ENCODE measurements at regions of chr2 and their contacts with region 1.

Region 1: GRCh38 chr2:83817511-83817910 is 641.6 kb downstream of the SUCLG1 start:
- DNase-seq: peak in 1 of 4 experiments; percentile 24
- ATAC-seq: peak; percentile 87
- H3K4me3 ChIP-seq: no peak overlapping the region
- H3K27ac ChIP-seq: no peak overlapping the region
- H3K4me1 ChIP-seq: no peaks in the 10 kb centered on the region
- H3K27me3 ChIP-seq: no peaks in the 10 kb centered on the region
- CTCF ChIP-seq: peak; percentile 20 to 65 (median 34); a peak in 4 of 6 replicates
- EP300 ChIP-seq: no peak
- POLR2A ChIP-seq: no peak
- RAD21 ChIP-seq: peak; percentile 56 to 58

Region 2: GRCh38 chr2:83342860-83343329 is 474.6 kb before region 1 on chr2:
- CTCF ChIA-PET with region 1: no interaction called
- POLR2A ChIA-PET with region 1: no interaction called
- in situ Hi-C with region 1: no loop called
- intact Hi-C with region 1: loop called (anchors 10 kb)
- DNase-seq: no peak
- ATAC-seq: peak; percentile 63
- H3K4me3 ChIP-seq: no peak overlapping the region
- H3K27ac ChIP-seq: no peak overlapping the region
- H3K4me1 ChIP-seq: no peaks in the 10 kb centered on the region
- H3K27me3 ChIP-seq: no peaks in the 10 kb centered on the region
- CTCF ChIP-seq: no peak
- EP300 ChIP-seq: no peak
- POLR2A ChIP-seq: no peak
- RAD21 ChIP-seq: no peak

Region 3: GRCh38 chr2:83584672-83585071 is 232.8 kb before region 1 on chr2:
- CTCF ChIA-PET with region 1: no interaction called
- POLR2A ChIA-PET with region 1: no interaction called
- in situ Hi-C with region 1: no loop called
- intact Hi-C with region 1: loop called (anchors 1 kb)
- DNase-seq: peak in 1 of 4 experiments; percentile 5
- ATAC-seq: no peak
- H3K4me3 ChIP-seq: no peak overlapping the region
- H3K27ac ChIP-seq: no peak overlapping the region
- H3K4me1 ChIP-seq: no peaks in the 10 kb centered on the region
- H3K27me3 ChIP-seq: no peaks in the 10 kb centered on the region
- CTCF ChIP-seq: no peak
- EP300 ChIP-seq: no peak
- POLR2A ChIP-seq: no peak
- RAD21 ChIP-seq: no peak

Region 4: GRCh38 chr2:83695037-83695436 is 122.5 kb before region 1 on chr2:
- CTCF ChIA-PET with region 1: no interaction called
- POLR2A ChIA-PET with region 1: no interaction called
- in situ Hi-C with region 1: no loop called
- intact Hi-C with region 1: loop called (anchors 10 kb)
- DNase-seq: no peak
- ATAC-seq: no peak; the same call in 1 of the 3 replicates
- H3K4me3 ChIP-seq: no peak overlapping the region
- H3K27ac ChIP-seq: no peak overlapping the region
- H3K4me1 ChIP-seq: no peaks in the 10 kb centered on the region; a peak in 1 of 5 replicates
- H3K27me3 ChIP-seq: no peaks in the 10 kb centered on the region
- CTCF ChIP-seq: no peak
- EP300 ChIP-seq: no peak
- POLR2A ChIP-seq: no peak
- RAD21 ChIP-seq: no peak

Region 5: DNA sequence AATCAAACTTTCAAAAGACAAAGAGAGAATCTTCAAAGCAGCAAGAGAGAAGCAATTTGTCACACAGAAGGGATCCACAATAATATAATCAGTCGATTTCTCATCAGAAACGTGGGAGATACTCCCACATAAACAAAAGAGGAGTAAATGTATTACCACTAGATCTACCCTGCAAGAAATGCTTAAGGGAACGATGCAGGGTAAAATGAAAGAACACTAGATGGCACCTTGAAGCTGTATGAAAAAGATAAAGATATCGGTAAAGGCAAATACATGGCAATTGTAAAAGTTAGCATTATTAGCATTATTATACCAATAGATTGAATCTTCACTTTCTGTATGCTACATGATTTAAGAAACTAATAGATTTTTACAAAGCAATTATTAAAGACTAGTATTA is 35.4 kb before region 1 on chr2:
- CTCF ChIA-PET with region 1: no interaction called
- POLR2A ChIA-PET with region 1: no interaction called
- in situ Hi-C with region 1: no loop called
- intact Hi-C with region 1: loop called (anchors 1 kb)
- DNase-seq: no peak
- ATAC-seq: no peak
- H3K4me3 ChIP-seq: no peak overlapping the region
- H3K27ac ChIP-seq: no peak overlapping the region
- H3K4me1 ChIP-seq: peaks cover 5 to 9% of the 10 kb centered on the region in 2 experiments; a peak in 3 of 5 replicates
- H3K27me3 ChIP-seq: no peaks in the 10 kb centered on the region
- CTCF ChIP-seq: peak in 2 of 3 experiments; percentile 32 to 38; a peak in 3 of 6 replicates
- EP300 ChIP-seq: no peak
- POLR2A ChIP-seq: no peak
- RAD21 ChIP-seq: peak in 1 of 2 experiments; percentile 39; a peak in 2 of 4 replicates

Region 6: GRCh38 chr2:84077492-84077891 is 260.0 kb after region 1 on chr2:
- CTCF ChIA-PET with region 1: no interaction called
- POLR2A ChIA-PET with region 1: no interaction called
- in situ Hi-C with region 1: loop called (anchors 10 kb)
- intact Hi-C with region 1: no loop called
- DNase-seq: peak; percentile 23 to 53 (median 29)
- ATAC-seq: peak; percentile 83
- H3K4me3 ChIP-seq: no peak overlapping the region
- H3K27ac ChIP-seq: no peak overlapping the region
- H3K4me1 ChIP-seq: peaks cover 0 to 2% of the 10 kb centered on the region in 2 experiments; a peak in 2 of 5 replicates
- H3K27me3 ChIP-seq: no peaks in the 10 kb centered on the region; a peak in 2 of 5 replicates
- CTCF ChIP-seq: peak; percentile 37 to 69 (median 55); a peak in 5 of 6 replicates
- EP300 ChIP-seq: no peak
- POLR2A ChIP-seq: no peak
- RAD21 ChIP-seq: peak; percentile 43 to 63

Measured in K562 (cell line).